Left lung (tissue), 14 donors: ENCODE measurements at regions of chr9 and their contacts with region 1.

Region 1: DNA sequence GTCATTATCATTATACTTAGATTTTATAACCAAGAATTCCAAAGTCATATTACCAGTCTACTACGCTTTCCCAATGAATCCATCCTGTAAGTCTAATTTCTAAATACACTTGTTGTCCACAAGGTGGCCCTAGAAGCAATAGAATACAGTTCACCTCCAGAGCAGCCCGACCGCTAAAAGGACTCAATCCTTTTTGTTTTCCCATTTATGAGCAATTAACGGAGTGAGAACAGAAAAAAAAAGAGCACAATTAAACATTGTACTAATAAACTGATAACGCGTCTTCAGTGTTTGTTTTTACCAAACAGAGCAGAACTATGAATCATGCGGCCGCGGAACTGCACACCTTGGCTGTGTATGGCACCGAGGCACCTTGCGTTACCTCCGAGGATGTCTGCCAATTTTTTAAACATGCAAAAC is 160.7 kb upstream of the DAPK1 start:
- DNase-seq: peak in 3 of 4 donors; percentile 41 to 89 (median 75)
- ATAC-seq: peak; percentile 95
- H3K4me3 ChIP-seq: peak overlapping the region; percentile 9 to 11
- H3K27ac ChIP-seq: no peak overlapping the region
- H3K4me1 ChIP-seq: peaks cover 0 to 11% of the 10 kb centered on the region in 2 donors
- H3K27me3 ChIP-seq: peaks cover 0 to 21% of the 10 kb centered on the region in 2 donors
- CTCF ChIP-seq: peak; percentile 56 to 59

Region 2: GRCh38 chr9:87223392-87224246 is 113.3 kb before region 1 on chr9:
- intact Hi-C with region 1: no loop called
- DNase-seq: no peak
- ATAC-seq: no peak
- H3K4me3 ChIP-seq: no peak overlapping the region
- H3K27ac ChIP-seq: no peak overlapping the region
- H3K4me1 ChIP-seq: no peaks in the 10 kb centered on the region
- H3K27me3 ChIP-seq: no peaks in the 10 kb centered on the region
- CTCF ChIP-seq: no peak

Region 3: DNA sequence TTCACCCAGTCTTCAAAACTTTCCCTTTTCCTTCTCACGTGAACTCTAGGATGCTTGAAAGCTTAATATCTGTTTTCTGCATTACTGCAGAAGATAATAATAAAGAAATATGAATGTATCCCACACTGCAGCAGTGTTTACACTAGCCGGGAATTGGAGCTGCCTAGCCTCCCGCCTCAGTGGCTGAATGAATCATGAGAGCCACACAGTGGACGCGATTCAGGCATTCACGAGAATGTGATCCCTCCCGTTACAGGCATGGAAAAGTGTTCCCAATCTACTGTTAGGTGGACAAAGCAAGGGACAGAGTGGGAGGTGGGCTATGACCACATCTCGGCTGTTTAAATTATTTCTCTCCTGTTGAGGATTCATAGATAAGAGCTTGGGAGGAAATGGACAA is 319.6 kb after region 1 on chr9:
- intact Hi-C with region 1: loop called in 1 of 2 experiments (anchors 5 kb)
- DNase-seq: no peak
- ATAC-seq: peak; percentile 73
- H3K4me3 ChIP-seq: no peak overlapping the region
- H3K27ac ChIP-seq: no peak overlapping the region
- H3K4me1 ChIP-seq: peaks cover 0 to 22% of the 10 kb centered on the region in 2 donors
- H3K27me3 ChIP-seq: no peaks in the 10 kb centered on the region
- CTCF ChIP-seq: no peak